ENCODE measurements at regions of chr19 and their contacts with region 1.

Region 1: GRCh38 chr19:6862673-6863078 is 24.7 kb upstream of the ADGRE1 start:
- DNase-seq: peak; percentile 75 to 84
- H3K4me3 ChIP-seq: peak overlapping the region; percentile 38; the same call in 1 of the 2 replicates
- H3K27ac ChIP-seq: 0 out of 2 replicates have a peak overlapping the region, but pooled peaks have one; percentile 16
- H3K4me1 ChIP-seq: peaks cover 16% of the 10 kb centered on the region
- H3K27me3 ChIP-seq: no peaks in the 10 kb centered on the region
- CTCF ChIP-seq: peak; percentile 86

Region 2: GRCh38 chr19:5987077-5987818 is 875.4 kb before region 1 on chr19:
- CTCF ChIA-PET with region 1: no interaction called
- POLR2A ChIA-PET with region 1: no interaction called
- intact Hi-C with region 1: loop called (anchors 5 kb)
- DNase-seq: peak; percentile 53 to 58
- H3K4me3 ChIP-seq: no peak overlapping the region
- H3K27ac ChIP-seq: no peak overlapping the region
- H3K4me1 ChIP-seq: 0 out of 2 replicates have a peak, but pooled peaks cover 5% of the 10 kb centered on the region
- H3K27me3 ChIP-seq: no peaks in the 10 kb centered on the region
- CTCF ChIP-seq: peak; percentile 86

Region 3: GRCh38 chr19:6516659-6517291 is 345.9 kb before region 1 on chr19:
- CTCF ChIA-PET with region 1: interaction called, 6 read pairs
- POLR2A ChIA-PET with region 1: no interaction called
- intact Hi-C with region 1: loop called (anchors 1 kb)
- DNase-seq: peak; percentile 43 to 76
- H3K4me3 ChIP-seq: peak overlapping the region; percentile 57
- H3K27ac ChIP-seq: no peak overlapping the region
- H3K4me1 ChIP-seq: no peaks in the 10 kb centered on the region
- H3K27me3 ChIP-seq: no peaks in the 10 kb centered on the region
- CTCF ChIP-seq: peak; percentile 93

Region 4: GRCh38 chr19:6632002-6632621 is 230.6 kb before region 1 on chr19:
- CTCF ChIA-PET with region 1: no interaction called
- POLR2A ChIA-PET with region 1: no interaction called
- intact Hi-C with region 1: loop called (anchors 1 kb)
- DNase-seq: peak; percentile 50 to 60
- H3K4me3 ChIP-seq: no peak overlapping the region
- H3K27ac ChIP-seq: no peak overlapping the region
- H3K4me1 ChIP-seq: no peaks in the 10 kb centered on the region
- H3K27me3 ChIP-seq: no peaks in the 10 kb centered on the region
- CTCF ChIP-seq: peak; percentile 80

Region 5: GRCh38 chr19:6801485-6802086 is 61.1 kb before region 1 on chr19:
- CTCF ChIA-PET with region 1: no interaction called
- POLR2A ChIA-PET with region 1: no interaction called
- intact Hi-C with region 1: loop called (anchors 1 kb)
- DNase-seq: peak; percentile 62 to 66
- H3K4me3 ChIP-seq: peak overlapping the region; percentile 57
- H3K27ac ChIP-seq: peak overlapping the region; percentile 96
- H3K4me1 ChIP-seq: peaks cover 24% of the 10 kb centered on the region
- H3K27me3 ChIP-seq: no peaks in the 10 kb centered on the region
- CTCF ChIP-seq: no peak

Measured in PC-9 (cell line).